Heart left ventricle (tissue), 16 donors: ENCODE measurements at regions of chr2 and their contacts with region 1.

Region 1: DNA sequence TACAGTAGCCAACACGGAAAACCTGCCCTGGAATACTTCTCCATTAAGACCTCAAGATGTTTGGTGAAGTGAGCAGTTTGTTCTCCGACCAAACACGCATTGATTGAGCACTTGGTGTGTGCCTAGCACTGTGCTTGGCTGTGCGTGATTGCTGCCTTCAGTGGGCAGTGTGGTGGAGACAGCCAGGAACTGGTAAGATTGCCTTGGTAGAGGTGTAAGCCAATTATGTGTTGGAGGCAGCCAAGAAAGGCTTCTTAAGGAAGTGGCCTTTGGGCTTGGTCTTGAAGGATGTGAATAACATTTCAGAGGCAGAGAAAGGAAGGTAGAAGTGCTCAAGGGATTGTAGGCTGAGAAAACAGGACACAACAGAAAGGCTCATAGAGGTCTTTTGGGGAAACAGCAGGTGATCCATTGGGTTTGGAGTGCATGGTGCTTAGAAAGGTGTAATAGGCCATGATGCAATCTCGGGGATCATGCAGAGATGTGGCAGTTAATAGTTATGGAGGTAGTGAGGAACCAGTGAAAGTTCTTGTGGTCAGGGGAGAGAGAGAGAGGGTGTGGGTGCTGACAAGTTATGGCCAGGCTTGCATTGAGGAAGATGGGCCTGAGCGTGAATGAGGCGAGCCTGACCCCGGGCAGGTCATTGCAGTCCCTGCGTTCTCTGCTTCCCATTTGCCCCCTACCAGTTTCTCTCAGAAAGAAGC is 6.3 kb downstream of the B3GNT2 start:
- DNase-seq: no peak
- ATAC-seq: peak in 1 of 4 donors; percentile 33
- H3K4me3 ChIP-seq: no peak overlapping the region
- H3K27ac ChIP-seq: peak overlapping the region in 4 of 12 donors; percentile 16 to 37 (median 24)
- H3K4me1 ChIP-seq: peaks cover 0 to 93% (median 66%) of the 10 kb centered on the region in 12 donors
- H3K27me3 ChIP-seq: no peaks in the 10 kb centered on the region
- CTCF ChIP-seq: no peak
- POLR2A ChIP-seq: no peak

Region 2: DNA sequence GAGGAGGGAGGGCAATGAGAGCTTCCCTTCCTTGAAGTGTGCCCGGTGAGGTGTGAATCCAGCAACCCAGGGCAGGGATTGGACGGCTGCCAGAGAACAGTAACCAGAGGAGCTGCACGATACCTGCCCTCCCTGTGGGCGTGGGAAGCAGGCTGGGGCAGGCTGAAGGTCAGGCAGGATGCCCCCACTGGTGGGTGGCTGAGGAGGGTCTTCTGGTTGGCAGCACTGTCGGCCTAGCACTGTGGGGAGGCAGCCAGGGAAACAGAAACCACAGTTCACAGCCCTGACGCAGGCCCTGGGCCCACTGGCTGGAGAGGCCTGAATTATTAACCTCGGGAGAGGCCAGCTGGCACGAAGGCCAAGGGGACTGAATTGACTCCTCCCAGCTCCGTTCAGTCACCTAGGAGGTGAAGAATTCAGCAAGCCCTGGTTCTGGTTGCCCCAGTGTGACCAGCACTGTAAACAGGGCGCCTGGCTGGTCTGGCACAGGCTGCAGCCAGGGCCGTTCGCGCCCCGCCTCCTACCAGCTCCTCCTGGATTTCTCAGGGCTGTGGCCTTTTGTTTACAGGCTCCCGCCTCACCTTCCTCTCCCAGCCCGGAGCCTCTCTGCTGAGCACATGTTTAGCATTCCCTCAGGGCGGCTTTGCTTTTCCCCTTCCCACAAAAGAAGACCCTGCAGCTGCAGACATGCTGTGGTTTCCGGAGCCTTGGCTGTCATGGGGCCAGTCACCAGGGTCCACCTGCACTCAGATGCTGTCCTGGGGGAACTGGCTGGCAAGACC is 91.5 kb after region 1 on chr2:
- intact Hi-C with region 1: loop called in 1 of 10 experiments (anchors 10 kb)
- DNase-seq: peak; percentile 45 to 73 (median 60)
- ATAC-seq: peak; percentile 53 to 84 (median 80)
- H3K4me3 ChIP-seq: peak overlapping the region in 1 of 12 donors; percentile 12
- H3K27ac ChIP-seq: peak overlapping the region in 11 of 12 donors; percentile 17 to 76 (median 54)
- H3K4me1 ChIP-seq: peaks cover 5 to 52% (median 33%) of the 10 kb centered on the region in 12 donors
- H3K27me3 ChIP-seq: no peaks in the 10 kb centered on the region
- CTCF ChIP-seq: no peak
- POLR2A ChIP-seq: no peak